Psoas muscle (tissue), 8 donors: ENCODE measurements at regions of chr5 and their contacts with region 1.

Region 1: DNA sequence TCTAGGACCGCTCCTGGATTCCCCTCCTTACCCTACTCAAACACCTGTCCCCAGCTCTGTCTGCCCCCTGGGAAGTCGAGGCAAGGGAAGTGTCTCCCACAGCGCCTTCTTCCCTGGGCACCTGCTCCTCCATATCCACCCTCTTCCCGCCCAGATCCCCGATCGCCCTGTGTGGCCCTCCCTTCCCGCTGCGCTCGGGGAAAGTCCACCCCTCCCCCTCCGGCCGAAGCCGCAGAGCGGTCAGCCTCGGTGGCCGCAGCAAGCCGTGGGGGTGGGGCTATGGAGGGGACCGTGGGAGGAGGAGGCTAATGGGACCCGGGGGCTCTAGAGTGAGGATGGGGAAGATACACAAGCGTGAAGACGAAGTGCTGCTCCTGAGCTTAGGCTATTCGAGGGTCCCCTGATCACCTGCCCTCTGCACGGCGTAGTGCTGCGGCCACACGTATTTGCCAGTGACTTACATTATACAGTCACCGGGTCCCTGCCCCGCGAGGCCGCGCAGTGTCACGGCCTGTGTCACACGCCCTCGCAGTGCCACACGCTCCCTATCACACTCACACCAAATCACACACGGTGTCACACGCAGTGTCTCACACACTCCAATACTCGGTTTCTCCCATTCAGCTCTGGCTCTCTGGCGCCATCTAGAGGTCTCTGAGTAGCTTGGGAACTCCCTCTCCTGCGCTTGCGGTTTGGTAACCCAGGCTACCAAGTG is 658 bp upstream of the PCDH1 start:
- DNase-seq: peak; percentile 88 to 91
- ATAC-seq: peak; percentile 88 to 92 (median 91)
- H3K4me3 ChIP-seq: peak overlapping the region; percentile 71
- H3K27ac ChIP-seq: peak overlapping the region; percentile 49
- H3K4me1 ChIP-seq: peaks cover 24% of the 10 kb centered on the region
- H3K27me3 ChIP-seq: peaks cover 0 to 62% (median 22%) of the 10 kb centered on the region in 3 donors
- CTCF ChIP-seq: peak; percentile 98

Region 2: DNA sequence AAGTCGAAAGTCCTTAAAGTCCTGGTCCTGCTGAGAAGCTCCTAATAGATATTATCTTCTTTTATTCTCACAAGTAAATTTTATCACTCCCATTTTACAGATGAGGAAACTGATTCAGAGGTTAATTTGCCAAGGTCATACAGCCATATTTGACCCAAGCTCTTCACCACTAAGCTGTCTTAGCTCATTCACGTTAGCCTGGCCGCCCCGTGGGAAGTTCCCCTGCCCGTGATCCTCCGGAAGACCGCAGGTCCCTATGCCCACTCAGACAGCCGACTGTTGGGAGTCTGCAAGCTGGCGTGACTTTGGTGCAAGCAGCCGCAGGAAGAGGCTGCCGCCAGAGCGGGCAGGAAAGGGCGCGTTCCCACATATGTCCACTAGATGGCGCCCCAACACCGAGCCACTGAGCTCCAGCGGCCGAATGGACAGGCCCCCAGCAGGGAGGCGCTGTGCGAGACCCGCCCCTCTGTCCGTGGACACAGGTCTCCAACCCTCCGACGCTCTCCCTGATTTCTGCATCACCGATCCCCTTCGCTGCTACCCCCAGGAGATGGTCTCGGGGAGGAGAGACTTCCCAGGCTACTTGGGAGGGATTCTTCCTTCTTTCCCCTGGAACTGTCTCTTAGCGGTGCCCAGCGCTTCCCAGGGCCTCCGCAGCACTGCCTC is 186.9 kb before region 1 on chr5:
- intact Hi-C with region 1: loop called (anchors 2 kb)
- DNase-seq: peak; percentile 84 to 91
- ATAC-seq: peak; percentile 95 to 99 (median 98)
- H3K4me3 ChIP-seq: peak overlapping the region; percentile 53
- H3K27ac ChIP-seq: no peak overlapping the region
- H3K4me1 ChIP-seq: peaks cover 4% of the 10 kb centered on the region
- H3K27me3 ChIP-seq: peaks cover 0 to 6% (median 2%) of the 10 kb centered on the region in 3 donors
- CTCF ChIP-seq: peak; percentile 99

Region 3: DNA sequence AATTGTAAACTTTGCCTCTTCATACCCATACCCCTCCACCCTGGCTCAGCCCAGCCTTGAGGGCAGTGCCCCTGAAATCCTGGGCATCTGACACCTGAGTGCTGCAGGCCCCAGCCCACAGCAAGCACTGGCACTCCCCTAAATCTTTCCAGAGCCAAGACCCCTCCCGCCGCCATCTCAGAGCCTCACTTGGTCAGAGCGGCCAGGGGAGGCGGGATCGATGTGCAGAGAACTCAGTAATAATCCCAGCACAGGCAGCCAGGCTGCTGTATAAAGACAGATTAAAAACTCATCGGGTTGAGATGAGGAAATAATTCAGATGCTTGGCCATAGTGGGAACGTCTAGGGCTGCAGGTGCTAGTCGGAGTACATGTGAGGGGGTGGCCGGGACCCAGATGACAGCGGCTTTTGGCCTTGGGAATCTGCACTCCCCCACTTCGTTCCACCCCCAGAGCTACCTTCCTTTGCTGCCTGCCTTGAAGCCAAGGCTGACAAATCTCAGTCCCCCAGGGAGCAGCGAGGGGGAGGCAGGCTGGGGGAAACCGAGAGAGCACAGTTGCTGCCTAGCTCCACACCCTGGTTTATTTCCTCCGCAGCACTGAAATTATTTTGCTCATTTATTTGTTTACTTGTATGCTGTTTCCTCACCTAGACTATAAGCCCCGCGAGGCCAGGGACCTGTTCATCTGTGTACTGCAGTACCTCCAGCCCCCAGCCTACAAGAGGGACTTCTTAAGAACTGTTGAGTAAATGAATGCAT is 177.3 kb before region 1 on chr5:
- intact Hi-C with region 1: loop called (anchors 1 to 2 kb)
- DNase-seq: no peak
- ATAC-seq: peak in 1 of 4 donors; percentile 11
- H3K4me3 ChIP-seq: peak overlapping the region; percentile 68
- H3K27ac ChIP-seq: no peak overlapping the region
- H3K4me1 ChIP-seq: peaks cover 13% of the 10 kb centered on the region
- H3K27me3 ChIP-seq: peaks cover 0 to 77% (median 14%) of the 10 kb centered on the region in 3 donors
- CTCF ChIP-seq: no peak

Region 4: GRCh38 chr5:141747152-141748141 is 131.4 kb before region 1 on chr5:
- intact Hi-C with region 1: no loop called
- DNase-seq: peak; percentile 64 to 83
- ATAC-seq: peak; percentile 43 to 78 (median 54)
- H3K4me3 ChIP-seq: no peak overlapping the region
- H3K27ac ChIP-seq: no peak overlapping the region
- H3K4me1 ChIP-seq: no peaks in the 10 kb centered on the region
- H3K27me3 ChIP-seq: peaks cover 0 to 26% (median 0%) of the 10 kb centered on the region in 3 donors
- CTCF ChIP-seq: no peak

Region 5: DNA sequence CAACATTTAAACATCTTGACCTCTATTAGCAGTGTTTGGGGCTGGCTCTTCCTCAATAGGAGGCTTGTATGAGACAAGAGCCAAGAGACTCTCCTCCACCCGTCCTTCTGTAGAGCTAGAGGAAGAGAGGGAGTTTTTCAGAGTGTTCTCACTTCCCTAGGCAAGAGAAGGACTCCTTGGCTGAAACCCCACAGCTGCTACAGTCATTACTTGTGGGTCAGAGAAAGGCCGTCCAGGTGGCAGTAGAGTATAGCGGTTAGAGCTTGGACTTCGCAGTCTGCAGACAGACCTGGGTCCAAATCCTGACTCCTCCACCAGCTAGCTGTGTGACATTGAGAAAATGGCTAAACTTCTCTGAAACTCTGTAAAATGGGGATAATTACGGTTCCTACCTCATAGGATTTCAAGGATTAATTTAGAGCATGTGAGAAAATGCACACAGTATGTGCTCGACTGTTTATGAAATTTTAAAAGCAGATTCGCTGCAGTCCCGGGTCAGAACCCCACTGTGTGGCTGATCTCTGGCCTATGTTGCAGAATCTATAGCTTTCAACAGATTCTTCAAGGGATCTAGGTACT is 116.0 kb before region 1 on chr5:
- intact Hi-C with region 1: loop called in 1 of 2 experiments (anchors 5 kb)
- DNase-seq: no peak
- ATAC-seq: no peak
- H3K4me3 ChIP-seq: no peak overlapping the region
- H3K27ac ChIP-seq: no peak overlapping the region
- H3K4me1 ChIP-seq: no peaks in the 10 kb centered on the region
- H3K27me3 ChIP-seq: peaks cover 0 to 37% (median 7%) of the 10 kb centered on the region in 3 donors
- CTCF ChIP-seq: no peak

Region 6: GRCh38 chr5:141951332-141951781 is 72.5 kb after region 1 on chr5:
- intact Hi-C with region 1: loop called (anchors 2 to 5 kb)
- DNase-seq: no peak
- ATAC-seq: peak in 2 of 4 donors; percentile 26 to 33
- H3K4me3 ChIP-seq: peak overlapping the region; percentile 32
- H3K27ac ChIP-seq: no peak overlapping the region
- H3K4me1 ChIP-seq: no peaks in the 10 kb centered on the region
- H3K27me3 ChIP-seq: peaks cover 0 to 4% (median 3%) of the 10 kb centered on the region in 3 donors
- CTCF ChIP-seq: peak; percentile 17

Region 7: DNA sequence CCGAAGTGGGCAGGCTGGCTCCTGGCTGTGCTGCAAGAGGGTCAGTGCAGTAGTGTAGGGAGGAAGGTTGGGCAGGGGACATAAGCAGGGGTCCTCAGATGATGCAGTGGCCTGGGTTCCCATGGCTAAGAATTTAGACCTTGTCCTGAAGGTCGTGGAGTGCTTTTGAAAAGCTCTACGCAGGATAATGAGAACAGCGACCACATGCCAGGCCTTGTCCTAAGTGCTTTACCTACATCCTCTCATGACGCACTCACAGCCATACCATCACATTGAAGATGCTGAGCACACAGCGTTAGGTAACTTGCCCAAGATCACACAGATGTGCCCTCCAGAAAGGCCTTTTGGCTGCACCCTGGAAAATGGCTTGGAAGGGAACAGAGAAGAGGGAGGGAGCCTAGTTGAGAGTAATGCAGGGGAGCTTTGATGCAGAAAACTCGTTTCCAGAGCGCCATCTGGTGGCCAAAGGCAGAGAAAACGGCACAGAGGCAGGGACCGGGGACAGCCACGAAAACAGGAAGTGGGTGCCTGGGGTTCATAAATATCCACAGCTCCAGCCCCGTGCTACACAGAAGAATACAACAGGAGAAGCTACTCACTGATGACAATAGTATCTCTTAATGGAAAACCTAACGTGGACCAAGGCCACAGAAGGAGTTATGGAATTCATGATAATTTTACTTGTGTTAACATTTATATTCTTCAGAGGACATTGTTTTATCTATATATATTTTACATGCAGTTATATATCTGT is 81.8 kb after region 1 on chr5:
- intact Hi-C with region 1: loop called in 1 of 2 experiments (anchors 5 kb)
- DNase-seq: peak; percentile 88 to 93
- ATAC-seq: peak; percentile 86 to 95 (median 87)
- H3K4me3 ChIP-seq: no peak overlapping the region
- H3K27ac ChIP-seq: no peak overlapping the region
- H3K4me1 ChIP-seq: peaks cover 5% of the 10 kb centered on the region
- H3K27me3 ChIP-seq: no peaks in the 10 kb centered on the region
- CTCF ChIP-seq: peak; percentile 89